ENCODE measurements at regions of chr7 and their contacts with region 1.

Region 1: DNA sequence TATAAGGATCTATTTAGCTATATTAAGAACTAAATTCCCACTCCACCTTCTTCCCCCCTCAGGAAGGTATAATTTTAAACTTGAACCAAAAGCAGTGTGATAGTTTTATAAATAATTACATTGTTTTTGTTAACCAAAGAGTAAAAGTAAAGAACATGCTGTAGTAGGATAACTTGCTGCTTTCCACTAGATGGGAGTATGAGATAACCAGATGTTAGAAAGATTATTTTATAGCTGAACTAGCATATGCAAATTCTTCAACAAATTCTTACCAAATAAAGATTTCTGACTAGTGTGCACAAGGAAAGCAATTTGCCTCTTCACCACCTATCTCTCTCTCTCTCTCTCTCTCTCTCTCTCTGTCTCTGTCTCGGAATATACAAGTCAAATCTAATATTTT is 31.8 kb downstream of the TES start:
- DNase-seq: no peak
- H3K4me3 ChIP-seq: no peak overlapping the region
- CTCF ChIP-seq: no peak

Region 2: GRCh38 chr7:116809636-116810266 is 567.6 kb after region 1 on chr7:
- CTCF ChIA-PET with region 1: interaction called, 11 read pairs
- POLR2A ChIA-PET with region 1: no interaction called
- DNase-seq: no peak
- H3K4me3 ChIP-seq: no peak overlapping the region
- CTCF ChIP-seq: peak; percentile 36

Measured in AG04449 (cell line).